Gastrocnemius medialis (tissue), 4 donors: ENCODE measurements at regions of chr17 and their contacts with region 1.

Region 1: DNA sequence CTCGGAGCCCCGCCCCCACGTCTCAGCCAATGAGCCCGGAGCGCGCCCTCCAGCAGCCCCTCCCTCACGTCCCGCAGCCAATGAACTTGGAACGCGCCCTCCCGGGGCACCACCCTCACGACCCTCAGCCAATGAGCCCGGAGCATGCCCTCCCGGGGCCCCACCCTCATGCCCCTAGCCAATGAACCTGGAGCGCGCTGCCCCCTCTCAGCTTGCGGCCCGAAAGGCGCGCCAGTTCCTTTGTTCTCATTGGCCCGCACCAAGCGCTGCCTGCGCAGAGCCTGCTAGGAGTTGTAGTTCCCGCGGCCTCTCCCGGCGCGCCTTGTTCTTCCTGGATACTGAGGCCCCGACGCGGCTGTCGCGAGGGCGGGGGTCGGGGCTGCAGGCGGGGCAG is at the start of gene LRRC45:
- DNase-seq: peak; percentile 100
- ATAC-seq: peak; percentile 86 to 91
- H3K4me3 ChIP-seq: peak within 1 kb of the TSS; percentile 89 to 92 (median 92)
- H3K27ac ChIP-seq: peak within 1 kb of the TSS; percentile 78 to 86 (median 79)
- H3K4me1 ChIP-seq: peaks cover 25 to 55% of the 10 kb centered on the region in 2 donors
- H3K27me3 ChIP-seq: no peaks in the 10 kb centered on the region
- CTCF ChIP-seq: no peak
- POLR2A ChIP-seq: no peak
- total RNA-seq, gene LRRC45: 1.1 to 5.0 (median 3.8) TPM

Region 2: GRCh38 chr17:81977211-81978027 is 45.6 kb before region 1 on chr17 and contains the start of gene ASPSCR1:
- in situ Hi-C with region 1: no loop called
- intact Hi-C with region 1: loop called (anchors 1 kb)
- DNase-seq: peak; percentile 78 to 87
- ATAC-seq: peak; percentile 91 to 95
- H3K4me3 ChIP-seq: peak within 1 kb of the TSS; percentile 75 to 95 (median 88)
- H3K27ac ChIP-seq: peak within 1 kb of the TSS; percentile 90 to 96 (median 94)
- H3K4me1 ChIP-seq: peaks cover 11 to 18% of the 10 kb centered on the region in 2 donors
- H3K27me3 ChIP-seq: no peaks in the 10 kb centered on the region
- CTCF ChIP-seq: peak in 2 of 5 experiments; percentile 22 to 29
- POLR2A ChIP-seq: peak; percentile 78 to 89
- total RNA-seq, gene ASPSCR1: 24.0 to 44.7 (median 32.0) TPM